Activated naive CD4-positive, alpha-beta T cell treated with anti-CD3 and anti-CD28 coated beads, Interleukin-2, amount 10 ng/mL, durations not matched to agents 7 days and 5 days (primary cell): ENCODE measurements at regions of chr10 and their contacts with region 1.

Region 1: DNA sequence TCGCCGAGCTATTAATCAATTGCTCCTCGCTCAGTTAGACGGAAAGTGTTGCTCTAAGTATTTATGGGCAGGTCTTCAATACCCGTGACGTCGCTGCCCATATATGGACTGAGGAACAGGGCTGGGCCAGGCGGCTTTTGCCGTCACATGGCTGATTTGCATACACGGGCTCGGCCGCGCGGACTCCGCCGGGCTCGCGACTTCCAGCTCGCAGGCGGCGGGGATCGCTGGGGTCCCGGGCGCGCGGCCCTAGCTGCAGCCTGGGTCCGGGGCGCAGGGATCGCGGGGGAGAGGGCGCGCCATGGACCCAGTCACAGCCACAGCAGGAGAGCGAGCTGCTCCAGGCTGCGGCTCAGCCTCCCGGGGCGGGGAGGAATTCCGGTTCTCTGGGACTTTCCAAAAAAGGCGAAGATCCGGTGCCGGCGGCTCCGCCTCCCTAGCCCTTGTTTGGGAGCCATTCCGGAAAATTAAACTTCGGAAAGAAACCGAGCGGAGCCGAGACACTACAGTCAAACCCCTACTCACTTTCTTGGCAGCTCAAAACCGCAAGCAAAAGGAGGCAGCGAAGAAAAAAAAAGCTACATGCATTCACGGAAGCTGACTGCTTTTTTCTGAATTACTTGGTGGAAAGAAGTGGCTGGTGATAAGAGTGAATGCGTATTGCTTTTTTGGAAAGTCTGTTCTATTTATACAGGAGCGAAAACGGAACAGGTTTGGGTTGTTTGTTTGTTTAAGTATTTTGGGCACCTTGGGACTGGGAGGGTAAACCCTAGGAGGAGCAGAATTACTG is at the start of gene EGR2:
- DNase-seq: peak; percentile 96
- H3K4me3 Mint-ChIP-seq: peak within 1 kb of the TSS; percentile 88
- H3K27ac Mint-ChIP-seq: peak within 1 kb of the TSS; percentile 97
- H3K4me1 Mint-ChIP-seq: peaks cover 39% of the 10 kb centered on the region
- H3K27me3 Mint-ChIP-seq: peaks cover 86% of the 10 kb centered on the region

Region 2: DNA sequence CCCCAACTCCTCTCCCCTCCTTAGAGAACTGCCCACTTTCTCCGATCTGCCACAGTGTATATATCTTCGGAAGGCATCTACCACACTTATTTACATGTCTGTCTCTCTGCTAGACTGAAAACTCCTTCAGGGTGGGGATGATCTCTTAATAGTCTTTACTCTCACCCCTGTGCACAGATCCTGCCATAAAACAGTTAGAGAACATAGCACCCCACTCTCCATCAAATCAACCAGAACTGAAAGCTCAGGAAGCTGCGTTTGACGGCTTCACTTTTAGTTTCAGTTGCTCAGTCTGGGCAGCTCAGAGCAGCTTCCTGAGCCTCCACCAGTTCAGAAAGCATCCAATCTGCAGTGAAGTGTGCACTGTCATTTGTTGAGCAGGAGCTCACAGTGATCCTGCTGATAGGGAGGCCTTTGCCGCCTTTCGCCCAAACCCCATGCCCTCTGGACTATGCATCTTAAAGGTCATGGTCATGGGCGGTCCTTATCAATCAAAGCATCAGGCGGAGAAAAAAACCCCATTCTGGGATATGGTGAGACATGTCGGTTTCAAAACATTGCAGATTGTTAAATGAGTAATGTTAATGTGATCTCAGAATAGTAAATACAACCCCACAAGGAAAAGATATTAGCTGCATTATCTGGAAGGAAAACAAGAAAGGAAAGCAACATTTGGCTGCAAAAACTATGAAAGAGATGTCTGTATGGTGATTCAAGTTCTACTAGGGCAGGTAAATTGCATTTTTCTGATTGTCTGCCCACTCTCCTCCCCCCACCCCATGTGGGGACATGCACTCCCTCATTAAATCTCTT is 179.1 kb before region 1 on chr10:
- CTCF ChIA-PET with region 1: interaction called, 14 read pairs
- DNase-seq: peak; percentile 79
- H3K4me3 Mint-ChIP-seq: no peak overlapping the region
- H3K27ac Mint-ChIP-seq: no peak overlapping the region
- H3K4me1 Mint-ChIP-seq: peaks cover 24% of the 10 kb centered on the region
- H3K27me3 Mint-ChIP-seq: no peaks in the 10 kb centered on the region

Region 3: GRCh38 chr10:62681211-62681940 is 135.2 kb before region 1 on chr10:
- CTCF ChIA-PET with region 1: interaction called, 14 read pairs
- DNase-seq: peak; percentile 57
- H3K4me3 Mint-ChIP-seq: no peak overlapping the region
- H3K27ac Mint-ChIP-seq: no peak overlapping the region
- H3K4me1 Mint-ChIP-seq: peaks cover 15% of the 10 kb centered on the region
- H3K27me3 Mint-ChIP-seq: peaks cover 3% of the 10 kb centered on the region

Region 4: GRCh38 chr10:62769574-62770242 is 46.8 kb before region 1 on chr10:
- CTCF ChIA-PET with region 1: no interaction called
- DNase-seq: no peak
- H3K4me3 Mint-ChIP-seq: no peak overlapping the region
- H3K27ac Mint-ChIP-seq: no peak overlapping the region
- H3K4me1 Mint-ChIP-seq: peaks cover 12% of the 10 kb centered on the region
- H3K27me3 Mint-ChIP-seq: peaks cover 10% of the 10 kb centered on the region

Region 5: DNA sequence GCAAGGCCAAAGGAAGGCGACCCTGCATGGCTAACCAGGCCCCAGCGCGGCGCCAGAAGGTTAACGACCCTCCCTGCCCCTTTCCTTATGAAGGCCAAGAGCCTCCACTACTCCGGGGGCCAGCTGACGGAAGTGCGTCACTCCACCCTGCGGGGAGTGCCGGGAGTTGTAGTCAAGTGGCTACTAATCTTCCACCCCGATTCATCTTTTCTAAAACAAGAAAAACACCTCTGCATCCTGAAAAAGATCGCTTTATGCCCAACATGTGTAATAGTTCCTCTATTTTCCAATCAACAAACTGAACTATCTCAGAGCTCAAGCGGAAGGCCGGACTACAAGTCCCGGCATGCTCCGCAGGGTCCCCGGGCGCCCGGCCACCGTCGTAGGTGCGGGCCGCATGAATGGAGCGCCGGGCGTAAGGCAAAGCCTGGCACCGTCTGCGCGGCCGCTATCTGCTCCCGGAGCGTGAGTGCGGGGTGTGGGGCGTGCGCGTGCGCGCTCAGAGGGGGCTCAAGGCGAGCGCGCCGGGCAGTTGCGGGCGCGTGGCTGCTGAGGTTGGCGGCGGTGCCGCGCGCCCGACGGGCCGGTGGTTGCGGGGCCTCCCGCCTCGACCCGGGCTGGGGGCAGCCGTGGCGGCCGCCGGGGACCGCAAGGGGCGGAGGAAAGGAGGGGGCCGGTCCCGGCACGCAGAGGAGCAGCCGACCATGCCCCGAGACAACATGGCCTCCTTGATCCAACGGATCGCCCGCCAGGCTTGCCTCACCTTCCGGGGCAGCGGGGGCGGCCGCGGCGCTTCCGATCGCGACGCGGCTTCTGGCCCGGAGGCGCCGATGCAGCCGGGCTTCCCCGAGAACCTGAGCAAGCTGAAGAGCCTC is 11.9 kb before region 1 on chr10 and contains the start of gene ADO:
- CTCF ChIA-PET with region 1: interaction called, 38 read pairs
- DNase-seq: peak; percentile 85
- H3K4me3 Mint-ChIP-seq: peak within 1 kb of the TSS; percentile 98
- H3K27ac Mint-ChIP-seq: peak within 1 kb of the TSS; percentile 99
- H3K4me1 Mint-ChIP-seq: peaks cover 42% of the 10 kb centered on the region
- H3K27me3 Mint-ChIP-seq: peaks cover 15% of the 10 kb centered on the region